Activated CD4-positive, alpha-beta T cell treated with anti-CD3 and anti-CD28 coated beads for 36 hours (primary cell): ENCODE measurements at regions of chr14 and their contacts with region 1.

Region 1: GRCh38 chr14:58199726-58200479 is at the start of gene ACTR10:
- DNase-seq: peak; percentile 93
- ATAC-seq: peak; percentile 93
- H3K4me3 Mint-ChIP-seq: peak within 1 kb of the TSS; percentile 97
- H3K27ac Mint-ChIP-seq: peak within 1 kb of the TSS; percentile 92
- H3K4me1 Mint-ChIP-seq: peaks cover 38% of the 10 kb centered on the region
- H3K27me3 Mint-ChIP-seq: no peaks in the 10 kb centered on the region
- total RNA-seq, gene ACTR10: 31.2 to 32.3 TPM

Region 2: DNA sequence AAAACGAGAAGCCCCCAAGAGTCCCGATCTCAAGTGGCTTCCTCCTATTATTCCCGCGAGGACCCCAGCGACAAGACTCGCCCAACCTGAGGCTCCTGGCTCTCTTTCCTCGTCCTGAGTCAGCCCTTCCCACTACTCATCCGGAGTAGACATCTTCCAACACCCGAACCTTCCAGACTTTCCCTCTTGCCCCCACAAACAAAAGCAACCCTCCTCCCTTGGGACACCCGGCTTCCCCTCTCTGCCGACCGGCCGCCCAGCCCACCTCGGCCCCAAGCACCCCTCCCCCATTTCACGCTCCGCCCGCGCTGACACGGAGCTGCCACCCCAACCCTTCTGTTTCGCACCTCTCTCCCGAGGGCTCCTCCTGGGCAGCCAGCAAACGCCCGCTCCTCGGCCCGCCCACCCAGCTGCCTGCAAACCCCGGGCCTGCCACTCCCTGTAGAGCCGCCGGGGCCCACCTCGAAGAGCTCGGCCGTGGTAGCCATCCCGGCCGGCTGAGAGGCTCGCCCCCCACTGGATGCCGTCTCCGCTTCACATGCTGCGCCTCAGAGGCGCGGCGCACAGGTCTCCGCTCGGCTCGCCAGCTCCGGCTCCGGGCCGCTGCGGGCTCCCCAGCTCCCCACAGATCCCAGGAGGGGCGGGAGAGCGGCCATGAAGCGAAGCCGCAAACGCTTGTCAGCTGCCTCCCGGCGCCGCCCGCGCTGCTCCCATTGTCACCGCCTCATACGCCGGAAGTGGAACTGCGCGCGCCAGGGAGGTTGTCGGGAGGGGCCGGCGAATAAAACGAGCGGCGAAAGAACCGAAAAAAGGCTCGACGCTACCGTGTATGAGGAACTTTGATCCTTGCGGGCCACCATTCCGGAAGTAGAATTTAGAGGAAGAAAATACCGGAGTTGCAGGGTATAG is 931.5 kb before region 1 on chr14 and contains the starts of genes AP5M1 and EXOC5:
- CTCF ChIA-PET with region 1: no interaction called
- POLR2A ChIA-PET with region 1: no interaction called
- intact Hi-C with region 1: loop called in 1 of 2 experiments (anchors 2 kb)
- DNase-seq: peak; percentile 96
- ATAC-seq: peak; percentile 93
- H3K4me3 Mint-ChIP-seq: peak within 1 kb of the TSS; percentile 90
- H3K27ac Mint-ChIP-seq: peak within 1 kb of the TSS; percentile 99
- H3K4me1 Mint-ChIP-seq: peaks cover 53% of the 10 kb centered on the region
- H3K27me3 Mint-ChIP-seq: no peaks in the 10 kb centered on the region
- total RNA-seq, gene AP5M1: 30.8 to 32.7 TPM
- total RNA-seq, gene EXOC5: 66.5 to 80.2 TPM

Region 3: GRCh38 chr14:58107947-58108552 is 91.9 kb before region 1 on chr14:
- CTCF ChIA-PET with region 1: interaction called, 4 read pairs
- POLR2A ChIA-PET with region 1: no interaction called
- intact Hi-C with region 1: loop called in 1 of 2 experiments (anchors 1 kb)
- DNase-seq: peak; percentile 59
- ATAC-seq: no peak
- H3K4me3 Mint-ChIP-seq: no peak overlapping the region
- H3K27ac Mint-ChIP-seq: no peak overlapping the region
- H3K4me1 Mint-ChIP-seq: peaks cover 6% of the 10 kb centered on the region
- H3K27me3 Mint-ChIP-seq: peaks cover 14% of the 10 kb centered on the region

Region 4: GRCh38 chr14:58216544-58216943 is 16.6 kb after region 1 on chr14:
- CTCF ChIA-PET with region 1: no interaction called
- POLR2A ChIA-PET with region 1: interaction called, 12 read pairs
- intact Hi-C with region 1: no loop called
- DNase-seq: no peak
- ATAC-seq: no peak
- H3K4me3 Mint-ChIP-seq: no peak overlapping the region
- H3K27ac Mint-ChIP-seq: peak overlapping the region; percentile 10
- H3K4me1 Mint-ChIP-seq: peaks cover 6% of the 10 kb centered on the region
- H3K27me3 Mint-ChIP-seq: no peaks in the 10 kb centered on the region

Region 5: DNA sequence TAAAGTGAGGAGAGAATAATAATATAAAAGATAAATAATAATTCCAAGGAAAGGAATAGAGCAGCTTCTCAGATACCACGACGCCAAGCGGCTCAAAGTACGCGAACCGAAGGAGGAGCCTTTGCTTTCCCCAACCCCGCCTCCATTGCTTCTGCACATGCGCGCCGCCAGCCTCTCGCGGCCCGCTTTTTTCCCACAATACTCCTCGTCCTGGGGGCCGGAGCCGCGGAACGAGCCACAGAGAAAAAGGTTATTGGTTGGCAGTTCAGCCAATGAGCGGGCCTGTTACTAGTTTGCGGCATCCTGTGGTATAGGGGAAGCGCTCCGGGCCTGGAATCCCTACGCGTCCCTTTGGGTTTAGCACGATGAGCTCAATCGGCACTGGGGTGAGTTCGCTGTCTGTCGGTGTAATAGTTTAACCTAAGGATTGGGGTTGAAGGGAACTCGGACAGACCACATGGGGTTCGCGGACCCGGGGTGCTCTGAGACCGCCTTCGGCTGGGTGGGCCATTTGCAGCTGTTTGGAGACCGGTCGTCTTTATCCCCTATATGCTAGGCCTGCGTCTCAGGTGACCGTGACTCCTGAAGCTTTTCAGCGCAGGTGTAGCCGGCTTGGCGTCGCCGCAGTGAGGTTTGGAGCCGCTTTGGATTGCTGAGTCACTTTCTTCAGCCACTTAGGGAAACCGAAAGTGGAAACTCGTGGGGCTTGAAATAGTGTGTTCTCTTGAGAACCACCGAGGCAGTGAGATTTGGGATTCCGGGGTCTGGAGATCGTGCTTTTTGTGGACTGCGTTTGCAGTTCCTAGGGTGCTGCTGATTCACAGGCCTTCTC is 44.9 kb after region 1 on chr14 and contains the start of gene PSMA3:
- CTCF ChIA-PET with region 1: no interaction called
- POLR2A ChIA-PET with region 1: no interaction called
- intact Hi-C with region 1: loop called (anchors 1 kb)
- DNase-seq: peak; percentile 98
- ATAC-seq: peak; percentile 93
- H3K4me3 Mint-ChIP-seq: peak within 1 kb of the TSS; percentile 96
- H3K27ac Mint-ChIP-seq: peak within 1 kb of the TSS; percentile 96
- H3K4me1 Mint-ChIP-seq: peaks cover 40% of the 10 kb centered on the region
- H3K27me3 Mint-ChIP-seq: no peaks in the 10 kb centered on the region
- total RNA-seq, gene PSMA3: 342 to 425 TPM

Region 6: GRCh38 chr14:59013672-59014298 is 813.9 kb after region 1 on chr14:
- CTCF ChIA-PET with region 1: no interaction called
- POLR2A ChIA-PET with region 1: no interaction called
- intact Hi-C with region 1: no loop called
- DNase-seq: no peak
- ATAC-seq: no peak
- H3K4me3 Mint-ChIP-seq: no peak overlapping the region
- H3K27ac Mint-ChIP-seq: no peak overlapping the region
- H3K4me1 Mint-ChIP-seq: no peaks in the 10 kb centered on the region
- H3K27me3 Mint-ChIP-seq: peaks cover 4% of the 10 kb centered on the region